ENCODE measurements at regions of chr11 and their contacts with region 1.

Region 1: GRCh38 chr11:75768112-75768908 is at the start of gene DGAT2:
- DNase-seq: peak; percentile 96
- H3K4me3 ChIP-seq: peak within 1 kb of the TSS; percentile 84
- H3K4me3 Mint-ChIP-seq: peak within 1 kb of the TSS; percentile 82
- H3K27ac Mint-ChIP-seq: peak within 1 kb of the TSS; percentile 98
- H3K4me1 ChIP-seq: peaks cover 20% of the 10 kb centered on the region
- H3K4me1 Mint-ChIP-seq: peaks cover 45% of the 10 kb centered on the region
- H3K27me3 ChIP-seq: no peaks in the 10 kb centered on the region
- H3K27me3 Mint-ChIP-seq: no peaks in the 10 kb centered on the region
- CTCF ChIP-seq: peak; percentile 83 to 97
- total RNA-seq, gene DGAT2: 73.6 and 75.8 TPM in 2 replicates

Region 2: DNA sequence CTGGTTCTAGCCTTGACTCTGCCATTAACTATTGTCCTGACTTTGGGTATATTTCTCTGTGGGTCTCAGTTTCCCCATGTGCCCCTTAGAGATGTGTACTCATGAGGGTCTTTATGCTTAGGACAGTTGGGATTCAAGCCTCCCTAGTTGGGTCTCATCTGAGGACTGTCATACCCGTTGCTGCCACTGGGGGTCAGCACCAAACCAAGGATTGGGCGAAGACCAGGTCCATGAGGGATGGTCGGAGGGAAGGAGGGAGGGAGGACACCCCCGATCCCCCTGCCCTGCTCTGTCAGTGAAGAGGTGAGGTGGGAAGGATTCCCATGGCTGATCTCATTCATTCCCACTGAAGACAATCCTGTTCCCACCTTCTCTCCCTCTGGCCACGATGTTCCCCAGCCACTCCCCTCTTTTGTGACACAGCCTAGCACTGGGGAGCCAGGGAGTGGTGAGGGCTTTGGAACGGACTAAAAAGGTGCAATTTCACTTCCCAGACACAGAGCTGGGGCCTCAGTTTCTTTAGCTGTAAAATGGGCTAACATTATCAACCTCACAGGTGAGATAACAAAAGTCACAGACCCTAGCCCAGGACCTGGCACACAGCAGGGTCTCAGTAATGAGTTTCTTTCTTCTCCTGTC is 322.9 kb before region 1 on chr11:
- CTCF ChIA-PET with region 1: no interaction called
- POLR2A ChIA-PET with region 1: no interaction called
- intact Hi-C with region 1: loop called (anchors 1 kb)
- DNase-seq: peak; percentile 84 to 92
- H3K4me3 ChIP-seq: no peak overlapping the region
- H3K4me3 Mint-ChIP-seq: no peak overlapping the region
- H3K27ac Mint-ChIP-seq: no peak overlapping the region
- H3K4me1 ChIP-seq: no peaks in the 10 kb centered on the region
- H3K4me1 Mint-ChIP-seq: no peaks in the 10 kb centered on the region
- H3K27me3 ChIP-seq: no peaks in the 10 kb centered on the region
- H3K27me3 Mint-ChIP-seq: no peaks in the 10 kb centered on the region
- CTCF ChIP-seq: peak; percentile 99 to 100

Region 3: DNA sequence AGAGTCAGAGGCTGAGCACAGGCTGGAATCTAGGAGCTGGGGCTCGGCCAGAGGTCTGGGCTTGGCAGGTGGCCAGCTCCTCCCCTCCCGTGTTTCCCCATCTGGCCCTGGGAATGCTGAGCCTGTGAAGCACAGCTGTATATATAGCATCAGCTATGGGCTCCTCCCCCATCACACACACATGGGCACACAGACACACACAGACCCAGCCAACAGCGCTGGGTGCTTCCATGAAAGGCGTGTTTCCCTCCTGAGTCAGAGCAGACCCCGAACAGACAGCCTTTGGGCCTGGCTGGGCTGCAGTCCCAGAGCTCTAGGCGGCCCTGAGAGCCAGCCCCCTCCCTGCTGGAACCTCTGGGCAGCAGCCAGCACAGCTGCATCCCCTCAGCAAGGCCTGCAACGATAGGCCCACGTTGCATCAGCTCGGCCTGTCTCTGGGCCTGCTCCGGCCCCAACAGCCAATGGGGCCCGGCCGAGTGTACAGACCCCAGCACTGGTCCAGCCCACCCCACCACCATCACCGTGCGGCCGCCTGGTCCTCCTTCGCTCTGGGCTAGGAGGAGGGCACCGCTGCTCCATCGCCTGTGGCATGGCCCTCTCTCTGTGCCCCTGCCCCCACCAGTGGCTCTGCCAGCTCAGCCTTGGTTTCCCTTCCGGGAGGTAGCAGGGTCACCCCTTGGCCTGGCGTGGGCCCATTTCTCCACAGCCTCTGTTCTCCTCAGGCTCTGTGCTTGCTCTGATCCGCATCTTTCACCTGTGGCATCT is 213.9 kb before region 1 on chr11:
- CTCF ChIA-PET with region 1: no interaction called
- POLR2A ChIA-PET with region 1: no interaction called
- intact Hi-C with region 1: no loop called
- DNase-seq: peak in 1 of 2 experiments; percentile 52
- H3K4me3 ChIP-seq: no peak overlapping the region
- H3K4me3 Mint-ChIP-seq: no peak overlapping the region
- H3K27ac Mint-ChIP-seq: peak overlapping the region; percentile 82
- H3K4me1 ChIP-seq: peaks cover 26% of the 10 kb centered on the region
- H3K4me1 Mint-ChIP-seq: peaks cover 45% of the 10 kb centered on the region
- H3K27me3 ChIP-seq: no peaks in the 10 kb centered on the region
- H3K27me3 Mint-ChIP-seq: no peaks in the 10 kb centered on the region
- CTCF ChIP-seq: no peak

Region 4: DNA sequence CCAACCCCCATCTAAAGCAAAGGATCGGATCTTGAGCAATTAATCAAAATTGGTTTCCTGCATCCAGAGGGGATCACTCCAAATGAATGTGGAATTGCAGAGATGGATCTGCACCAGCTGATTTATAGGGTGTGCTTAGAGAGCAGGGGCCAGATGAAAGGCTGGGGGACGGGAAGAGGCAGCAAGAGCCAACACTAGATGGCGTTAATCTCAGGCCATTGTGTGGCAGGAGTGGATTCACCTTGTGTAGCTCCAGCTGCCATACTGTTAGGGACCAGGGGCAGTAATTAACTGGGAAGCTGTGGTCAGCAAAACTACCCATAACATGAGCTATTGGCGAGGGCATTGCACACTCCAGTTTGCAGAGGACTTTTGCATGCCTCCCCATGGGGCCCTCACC is 170.7 kb before region 1 on chr11:
- CTCF ChIA-PET with region 1: interaction called, 12 read pairs
- POLR2A ChIA-PET with region 1: no interaction called
- intact Hi-C with region 1: loop called (anchors 1 kb)
- DNase-seq: peak; percentile 76 to 80
- H3K4me3 ChIP-seq: no peak overlapping the region
- H3K4me3 Mint-ChIP-seq: no peak overlapping the region
- H3K27ac Mint-ChIP-seq: no peak overlapping the region
- H3K4me1 ChIP-seq: peaks cover 10% of the 10 kb centered on the region
- H3K4me1 Mint-ChIP-seq: peaks cover 9% of the 10 kb centered on the region
- H3K27me3 ChIP-seq: no peaks in the 10 kb centered on the region
- H3K27me3 Mint-ChIP-seq: no peaks in the 10 kb centered on the region
- CTCF ChIP-seq: peak; percentile 87 to 90

Region 5: DNA sequence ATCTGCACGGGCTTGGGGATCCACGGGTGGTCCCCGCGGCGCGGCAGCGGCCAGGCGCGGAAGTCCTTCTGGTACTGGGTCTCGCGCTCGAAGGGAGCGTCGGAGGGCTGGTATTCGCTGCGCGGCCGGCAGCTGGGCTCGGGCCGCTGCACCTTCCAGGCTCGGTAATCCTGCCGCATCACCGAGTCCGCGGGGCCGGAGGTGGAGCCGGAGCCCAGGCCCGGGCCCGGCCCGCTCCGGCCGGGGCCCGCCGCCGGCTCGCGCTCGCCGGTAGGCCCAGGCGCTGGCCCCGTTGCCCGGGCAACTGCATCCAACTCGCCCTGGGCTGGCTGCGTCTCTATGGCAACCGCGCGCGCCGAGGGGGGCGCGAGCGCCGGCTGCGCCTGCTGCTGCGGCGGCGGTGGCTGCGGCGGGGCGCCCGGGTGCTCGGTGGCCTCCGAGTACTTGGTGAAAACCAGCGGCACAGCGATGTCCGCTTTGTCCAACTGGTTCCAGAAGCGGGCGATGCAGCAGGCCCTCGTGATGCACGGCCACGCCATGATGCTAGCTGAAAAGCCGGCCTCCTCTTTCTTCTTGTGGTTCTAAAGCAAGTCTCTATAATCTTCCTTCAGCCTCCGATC is 100.4 kb before region 1 on chr11:
- CTCF ChIA-PET with region 1: interaction called, 5 read pairs
- POLR2A ChIA-PET with region 1: no interaction called
- intact Hi-C with region 1: loop called (anchors 1 kb)
- DNase-seq: peak; percentile 85 to 90
- H3K4me3 ChIP-seq: peak overlapping the region; percentile 69
- H3K4me3 Mint-ChIP-seq: peak overlapping the region; percentile 82
- H3K27ac Mint-ChIP-seq: peak overlapping the region; percentile 68
- H3K4me1 ChIP-seq: peaks cover 42% of the 10 kb centered on the region
- H3K4me1 Mint-ChIP-seq: peaks cover 33% of the 10 kb centered on the region
- H3K27me3 ChIP-seq: no peaks in the 10 kb centered on the region
- H3K27me3 Mint-ChIP-seq: no peaks in the 10 kb centered on the region
- CTCF ChIP-seq: no peak

Region 6: GRCh38 chr11:75786101-75786736 is 17.9 kb after region 1 on chr11:
- CTCF ChIA-PET with region 1: interaction called, 19 read pairs
- POLR2A ChIA-PET with region 1: no interaction called
- intact Hi-C with region 1: loop called (anchors 1 kb)
- DNase-seq: peak; percentile 97 to 98
- H3K4me3 ChIP-seq: no peak overlapping the region
- H3K4me3 Mint-ChIP-seq: peak overlapping the region; percentile 53
- H3K27ac Mint-ChIP-seq: peak overlapping the region; percentile 77
- H3K4me1 ChIP-seq: peaks cover 60% of the 10 kb centered on the region
- H3K4me1 Mint-ChIP-seq: peaks cover 57% of the 10 kb centered on the region
- H3K27me3 ChIP-seq: no peaks in the 10 kb centered on the region
- H3K27me3 Mint-ChIP-seq: no peaks in the 10 kb centered on the region
- CTCF ChIP-seq: no peak

Region 7: DNA sequence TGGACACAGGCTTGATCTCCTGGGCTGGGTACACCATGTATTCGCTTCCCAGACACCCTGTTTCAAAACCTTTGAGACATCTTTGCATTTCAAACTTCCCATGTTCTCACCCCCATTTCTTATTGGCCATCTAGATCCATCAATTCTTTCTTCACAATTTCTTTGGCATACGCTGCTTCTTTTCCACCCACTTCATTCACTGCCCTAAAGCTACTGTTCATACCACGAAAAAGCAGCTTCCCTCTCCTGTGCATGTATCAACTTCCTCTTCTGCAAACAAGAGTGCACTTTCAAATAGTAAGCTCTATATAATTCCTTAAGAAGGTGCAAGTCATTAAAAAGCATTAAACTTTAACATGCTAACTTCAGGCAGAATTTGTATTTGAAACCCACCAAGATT is 68.1 kb after region 1 on chr11:
- CTCF ChIA-PET with region 1: no interaction called
- POLR2A ChIA-PET with region 1: no interaction called
- intact Hi-C with region 1: no loop called
- DNase-seq: no peak
- H3K4me3 ChIP-seq: no peak overlapping the region
- H3K4me3 Mint-ChIP-seq: no peak overlapping the region
- H3K27ac Mint-ChIP-seq: no peak overlapping the region
- H3K4me1 ChIP-seq: peaks cover 6% of the 10 kb centered on the region; the same call in 1 of the 2 replicates
- H3K4me1 Mint-ChIP-seq: peaks cover 19% of the 10 kb centered on the region
- H3K27me3 ChIP-seq: no peaks in the 10 kb centered on the region
- H3K27me3 Mint-ChIP-seq: no peaks in the 10 kb centered on the region
- CTCF ChIP-seq: no peak

Region 8: GRCh38 chr11:75867775-75868374 is 99.6 kb after region 1 on chr11:
- CTCF ChIA-PET with region 1: no interaction called
- POLR2A ChIA-PET with region 1: no interaction called
- intact Hi-C with region 1: loop called (anchors 1 kb)
- DNase-seq: peak in 1 of 2 experiments; percentile 73
- H3K4me3 ChIP-seq: no peak overlapping the region
- H3K4me3 Mint-ChIP-seq: no peak overlapping the region
- H3K27ac Mint-ChIP-seq: peak overlapping the region; percentile 30
- H3K4me1 ChIP-seq: peaks cover 14% of the 10 kb centered on the region
- H3K4me1 Mint-ChIP-seq: peaks cover 10% of the 10 kb centered on the region
- H3K27me3 ChIP-seq: no peaks in the 10 kb centered on the region
- H3K27me3 Mint-ChIP-seq: no peaks in the 10 kb centered on the region
- CTCF ChIP-seq: peak; percentile 89 to 90

Region 9: DNA sequence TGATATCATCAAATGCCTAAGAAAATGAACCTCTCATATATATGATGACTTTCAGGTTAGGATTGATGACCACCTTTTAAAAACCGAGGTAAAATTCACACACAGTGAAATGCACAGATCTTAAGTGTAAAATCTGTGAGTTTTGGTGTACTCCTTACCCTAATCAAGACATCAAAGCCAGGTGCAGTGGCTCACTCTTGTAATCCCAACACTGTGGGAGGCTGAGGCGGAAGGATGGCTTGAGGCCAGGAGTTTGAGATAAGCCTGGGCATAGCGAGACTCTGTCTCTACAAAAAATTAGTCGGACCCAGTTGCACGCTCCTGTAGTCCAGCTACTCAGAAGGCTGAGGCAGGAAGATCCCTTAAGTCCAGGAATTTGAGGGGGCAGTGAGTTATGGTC is 187.1 kb after region 1 on chr11:
- CTCF ChIA-PET with region 1: no interaction called
- POLR2A ChIA-PET with region 1: no interaction called
- intact Hi-C with region 1: no loop called
- DNase-seq: no peak
- H3K4me3 ChIP-seq: no peak overlapping the region
- H3K4me3 Mint-ChIP-seq: no peak overlapping the region
- H3K27ac Mint-ChIP-seq: no peak overlapping the region
- H3K4me1 ChIP-seq: peaks cover 5% of the 10 kb centered on the region; the same call in 1 of the 2 replicates
- H3K4me1 Mint-ChIP-seq: no peaks in the 10 kb centered on the region
- H3K27me3 ChIP-seq: no peaks in the 10 kb centered on the region
- H3K27me3 Mint-ChIP-seq: no peaks in the 10 kb centered on the region
- CTCF ChIP-seq: no peak

Measured in Caco-2 (cell line).